HEK293 (cell line): ENCODE measurements at regions of chr14 and their contacts with region 1.

Region 1: GRCh38 chr14:24215495-24216344 is at the start of gene MDP1:
- H3K4me3 ChIP-seq: peak within 1 kb of the TSS; percentile 81
- H3K27ac ChIP-seq: peak within 1 kb of the TSS; percentile 76
- H3K4me1 ChIP-seq: no peaks in the 10 kb centered on the region
- CTCF ChIP-seq: peak; percentile 93

Region 2: GRCh38 chr14:24141097-24141880 is 74.4 kb before region 1 on chr14 and contains the start of gene EMC9:
- CTCF ChIA-PET with region 1: no interaction called
- POLR2A ChIA-PET with region 1: interaction called, 10 read pairs
- H3K4me3 ChIP-seq: peak within 1 kb of the TSS; percentile 90
- H3K27ac ChIP-seq: peak within 1 kb of the TSS; percentile 89
- H3K4me1 ChIP-seq: peaks cover 8% of the 10 kb centered on the region
- CTCF ChIP-seq: peak; percentile 78

Region 3: DNA sequence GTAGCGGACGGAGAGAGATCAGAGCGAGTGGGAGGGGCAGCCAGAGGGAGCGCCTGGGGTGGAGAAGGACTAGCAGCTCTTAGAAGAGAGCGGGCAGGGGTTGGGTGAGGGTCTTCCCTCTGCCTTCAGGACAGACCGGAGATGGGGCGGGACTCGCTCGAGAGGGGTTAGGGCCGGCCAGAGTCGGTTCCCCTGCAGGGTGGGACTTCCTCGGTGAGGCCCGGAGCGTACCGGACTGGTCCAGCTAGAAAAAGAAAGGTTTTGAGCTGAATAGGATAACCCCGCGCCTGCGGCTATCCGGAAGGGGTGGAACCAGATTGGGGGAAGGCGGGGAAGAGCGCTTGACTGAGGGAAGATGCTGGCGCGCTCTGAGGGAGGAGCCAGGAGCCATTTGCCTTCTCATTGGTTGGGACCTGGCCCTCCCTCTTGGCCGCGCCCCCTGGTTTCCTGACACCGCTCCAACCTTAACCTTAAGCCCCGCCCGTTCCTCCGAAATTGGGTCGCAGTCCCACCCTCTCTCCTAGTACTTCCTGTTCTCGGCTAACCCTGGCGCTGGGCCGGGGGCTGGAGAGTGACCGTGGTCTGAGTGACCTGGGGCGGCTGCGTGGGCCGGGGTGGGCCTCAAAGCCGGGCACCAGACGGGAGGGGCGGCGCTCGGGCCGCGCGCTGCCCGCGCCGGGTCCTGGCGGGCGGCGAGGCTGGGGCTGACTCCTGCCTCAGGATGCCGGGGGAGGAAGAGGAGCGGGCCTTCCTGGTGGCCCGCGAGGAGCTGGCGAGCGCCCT is 68.6 kb before region 1 on chr14 and contains the start of gene RNF31:
- CTCF ChIA-PET with region 1: no interaction called
- POLR2A ChIA-PET with region 1: interaction called, 10 read pairs
- H3K4me3 ChIP-seq: peak within 1 kb of the TSS; percentile 91
- H3K27ac ChIP-seq: peak within 1 kb of the TSS; percentile 81; the same call in 1 of the 2 replicates
- H3K4me1 ChIP-seq: peaks cover 8% of the 10 kb centered on the region
- CTCF ChIP-seq: no peak

Region 4: DNA sequence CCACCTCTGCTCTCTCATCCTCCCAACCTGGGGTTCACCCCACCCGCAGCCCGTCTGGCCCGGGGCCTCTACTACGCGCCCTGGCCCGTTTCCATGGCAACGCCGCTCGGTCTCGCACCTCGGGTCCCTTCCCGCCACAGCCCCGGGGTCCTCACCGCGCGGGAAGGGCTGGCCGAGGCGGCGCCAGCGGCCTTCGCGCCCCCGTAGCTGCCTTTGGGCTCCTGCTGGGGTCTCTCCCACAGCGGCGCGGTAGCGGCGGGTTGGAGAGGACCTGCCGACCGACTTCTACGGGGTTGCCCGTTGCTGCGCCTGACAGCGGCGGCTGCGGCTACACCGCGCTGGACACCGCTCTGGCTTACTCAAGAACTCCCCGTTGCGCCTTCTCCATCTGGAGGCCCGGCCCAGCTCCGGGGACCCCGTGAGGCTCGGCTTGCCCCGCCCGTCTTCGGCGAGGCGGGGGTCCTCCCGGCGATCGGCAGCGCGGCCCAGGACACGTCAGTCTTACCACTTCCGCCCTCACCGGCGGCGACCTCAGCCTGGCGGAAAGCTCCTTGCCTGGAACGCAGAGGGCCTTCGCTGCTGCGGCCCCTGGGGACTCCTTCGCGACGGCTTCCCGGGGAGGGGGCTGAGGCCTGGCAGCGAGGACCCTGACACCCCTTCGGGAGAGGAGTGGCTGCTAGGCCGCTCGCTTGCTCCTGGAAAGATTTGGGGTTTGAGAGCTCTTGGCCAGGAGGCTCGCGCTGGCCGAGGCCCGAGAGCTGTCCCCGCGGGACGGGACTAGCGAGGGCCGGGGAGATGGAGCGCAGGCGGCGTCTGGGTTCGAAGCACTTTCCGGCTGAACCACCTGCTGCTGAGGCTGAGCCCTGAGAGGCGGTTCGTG is 20.3 kb before region 1 on chr14 and contains the start of gene TM9SF1:
- CTCF ChIA-PET with region 1: no interaction called
- POLR2A ChIA-PET with region 1: interaction called, 43 read pairs
- H3K4me3 ChIP-seq: peak within 1 kb of the TSS; percentile 89
- H3K27ac ChIP-seq: peak within 1 kb of the TSS; percentile 97
- H3K4me1 ChIP-seq: peaks cover 4% of the 10 kb centered on the region; the same call in 1 of the 2 replicates
- CTCF ChIP-seq: 0 out of 2 replicates have a peak, but pooled peaks have one; percentile 29

Region 5: GRCh38 chr14:24204163-24205146 is 11.3 kb before region 1 on chr14:
- CTCF ChIA-PET with region 1: interaction called, 5 read pairs
- POLR2A ChIA-PET with region 1: interaction called, 10 read pairs
- H3K4me3 ChIP-seq: no peak overlapping the region
- H3K27ac ChIP-seq: no peak overlapping the region
- H3K4me1 ChIP-seq: no peaks in the 10 kb centered on the region
- CTCF ChIP-seq: no peak

Region 6: DNA sequence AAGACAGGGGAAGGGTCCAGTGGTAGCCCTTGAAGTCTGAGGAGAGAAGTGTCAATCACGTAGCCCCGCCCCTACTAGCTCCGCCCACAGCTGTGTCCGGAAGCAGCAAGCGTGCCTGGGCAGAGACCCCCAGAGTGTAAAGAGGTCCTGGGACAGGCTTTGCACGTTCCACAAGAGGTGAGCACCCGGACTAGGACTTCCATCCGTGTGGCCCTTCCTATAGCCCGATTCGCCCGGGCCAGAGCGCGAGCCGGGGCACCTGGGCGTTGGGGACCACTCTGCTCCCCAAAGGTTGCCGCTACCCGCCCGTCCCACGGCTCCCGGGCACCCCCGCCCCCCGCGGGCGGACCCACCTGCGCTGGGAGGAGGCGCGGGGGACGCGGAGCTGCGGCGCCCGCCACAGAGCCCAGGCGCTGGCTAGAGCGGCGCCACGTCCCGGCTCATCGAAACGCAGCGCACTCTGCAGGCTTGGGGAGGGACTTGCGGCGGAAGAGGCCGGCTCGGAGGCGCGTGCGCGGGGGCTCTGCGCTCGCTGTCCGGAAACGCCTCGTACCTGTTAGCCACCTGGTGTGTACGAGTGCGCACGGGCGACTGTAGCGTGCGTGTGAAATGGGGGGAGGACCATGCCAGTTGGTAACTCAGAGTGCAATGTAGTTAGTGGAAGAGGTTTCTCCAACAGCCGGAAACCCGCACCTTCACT is 55.6 kb after region 1 on chr14 and contains the start of gene RABGGTA:
- CTCF ChIA-PET with region 1: interaction called, 4 read pairs
- POLR2A ChIA-PET with region 1: interaction called, 11 read pairs
- H3K4me3 ChIP-seq: peak within 1 kb of the TSS; percentile 92
- H3K27ac ChIP-seq: peak within 1 kb of the TSS; percentile 94
- H3K4me1 ChIP-seq: peaks cover 3% of the 10 kb centered on the region; the same call in 1 of the 2 replicates
- CTCF ChIP-seq: peak; percentile 96